GM18951 (cell line): ENCODE measurements at regions of chr7 and their contacts with region 1.

Region 1: GRCh38 chr7:100215895-100216294 is 3.9 kb upstream of the PVRIG start:
- POLR2A ChIP-seq: no peak

Region 2: GRCh38 chr7:100148559-100149350 is 67.1 kb before region 1 on chr7 and contains the start of gene LAMTOR4:
- in situ Hi-C with region 1: loop called (anchors 10 kb)
- POLR2A ChIP-seq: peak; percentile 86

Region 3: GRCh38 chr7:100342765-100343164 is 126.9 kb after region 1 on chr7:
- in situ Hi-C with region 1: loop called (anchors 10 kb)
- POLR2A ChIP-seq: no peak